CD8-positive, alpha-beta T cell (primary cell): ENCODE measurements at regions of chr11 and their contacts with region 1.

Region 1: GRCh38 chr11:73597956-73598718 is at the start of gene FAM168A:
- DNase-seq: peak; percentile 85 to 98 (median 93)
- ATAC-seq: peak; percentile 87
- H3K4me3 ChIP-seq: peak within 1 kb of the TSS; percentile 81 to 99
- H3K4me3 Mint-ChIP-seq: peak within 1 kb of the TSS; percentile 90
- H3K27ac ChIP-seq: peak within 1 kb of the TSS; percentile 76 to 83
- H3K27ac Mint-ChIP-seq: peak within 1 kb of the TSS; percentile 90
- H3K4me1 ChIP-seq: peaks cover 20% of the 10 kb centered on the region
- H3K4me1 Mint-ChIP-seq: peaks cover 46% of the 10 kb centered on the region
- H3K27me3 ChIP-seq: no peaks in the 10 kb centered on the region
- H3K27me3 Mint-ChIP-seq: no peaks in the 10 kb centered on the region
- CTCF ChIP-seq: no peak
- total RNA-seq, gene FAM168A: 18.4 to 18.8 TPM

Region 2: GRCh38 chr11:71928737-71929452 is 1669.2 kb before region 1 on chr11 and contains the start of gene RNF121:
- CTCF ChIA-PET with region 1: no interaction called
- POLR2A ChIA-PET with region 1: no interaction called
- intact Hi-C with region 1: loop called in 1 of 2 experiments (anchors 5 kb)
- DNase-seq: peak; percentile 94 to 99 (median 97)
- ATAC-seq: peak; percentile 86
- H3K4me3 ChIP-seq: peak within 1 kb of the TSS; percentile 67 to 98
- H3K4me3 Mint-ChIP-seq: peak within 1 kb of the TSS; percentile 100
- H3K27ac ChIP-seq: peak within 1 kb of the TSS; percentile 90 to 96
- H3K27ac Mint-ChIP-seq: peak within 1 kb of the TSS; percentile 99
- H3K4me1 ChIP-seq: peaks cover 22% of the 10 kb centered on the region
- H3K4me1 Mint-ChIP-seq: peaks cover 57% of the 10 kb centered on the region
- H3K27me3 ChIP-seq: no peaks in the 10 kb centered on the region
- H3K27me3 Mint-ChIP-seq: no peaks in the 10 kb centered on the region
- CTCF ChIP-seq: no peak
- total RNA-seq, gene RNF121: 8.5 to 9.0 TPM

Region 3: GRCh38 chr11:72924568-72925190 is 673.5 kb before region 1 on chr11:
- CTCF ChIA-PET with region 1: no interaction called
- POLR2A ChIA-PET with region 1: no interaction called
- intact Hi-C with region 1: no loop called
- DNase-seq: peak in 2 of 9 experiments; percentile 41 to 57
- ATAC-seq: no peak
- H3K4me3 ChIP-seq: no peak overlapping the region
- H3K4me3 Mint-ChIP-seq: no peak overlapping the region
- H3K27ac ChIP-seq: no peak overlapping the region
- H3K27ac Mint-ChIP-seq: no peak overlapping the region
- H3K4me1 ChIP-seq: peaks cover 3% of the 10 kb centered on the region
- H3K4me1 Mint-ChIP-seq: peaks cover 5% of the 10 kb centered on the region
- H3K27me3 ChIP-seq: no peaks in the 10 kb centered on the region
- H3K27me3 Mint-ChIP-seq: no peaks in the 10 kb centered on the region
- CTCF ChIP-seq: peak; percentile 42

Region 4: DNA sequence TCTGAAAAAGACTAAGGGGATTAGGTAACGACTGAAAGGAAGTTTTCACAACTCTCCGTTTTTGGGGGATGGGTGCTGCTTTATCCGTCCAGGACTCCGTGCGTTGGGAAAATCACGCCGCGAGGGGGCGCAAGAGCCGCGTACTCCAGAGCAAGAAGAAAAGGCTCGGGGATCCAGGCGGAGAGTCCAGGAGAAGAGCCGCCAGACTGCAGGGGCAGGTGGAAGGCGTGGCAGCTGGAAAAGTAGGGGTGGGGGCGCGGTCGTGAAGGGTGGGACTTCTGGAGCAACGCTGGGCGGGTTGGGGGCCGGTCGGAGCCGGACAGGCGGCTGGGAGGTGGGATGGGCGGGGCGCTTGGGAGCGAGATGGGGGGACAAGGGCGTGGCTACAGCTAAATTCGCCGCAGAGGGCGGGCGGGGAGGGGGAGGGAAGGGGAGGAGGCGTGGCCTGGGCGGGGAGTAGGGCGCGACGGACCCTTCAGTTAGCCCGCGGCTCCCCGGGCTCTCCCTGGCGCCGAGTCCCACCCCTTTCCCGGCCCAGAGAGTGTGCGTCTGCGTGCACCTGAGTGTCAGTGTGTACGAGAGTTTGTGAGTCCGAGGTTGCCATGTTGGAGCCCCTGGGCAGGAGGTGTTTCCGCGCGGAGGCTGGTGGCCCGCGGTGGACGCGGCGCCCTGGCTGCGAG is 290.7 kb before region 1 on chr11:
- CTCF ChIA-PET with region 1: no interaction called
- POLR2A ChIA-PET with region 1: no interaction called
- intact Hi-C with region 1: loop called in 1 of 2 experiments (anchors 2 kb)
- DNase-seq: peak; percentile 77 to 94 (median 89)
- ATAC-seq: peak; percentile 71
- H3K4me3 ChIP-seq: peak overlapping the region; percentile 62 to 77
- H3K4me3 Mint-ChIP-seq: peak overlapping the region; percentile 86
- H3K27ac ChIP-seq: no peak overlapping the region
- H3K27ac Mint-ChIP-seq: no peak overlapping the region
- H3K4me1 ChIP-seq: peaks cover 9% of the 10 kb centered on the region
- H3K4me1 Mint-ChIP-seq: peaks cover 10% of the 10 kb centered on the region
- H3K27me3 ChIP-seq: peaks cover 11 to 12% of the 10 kb centered on the region in 2 experiments
- H3K27me3 Mint-ChIP-seq: peaks cover 15% of the 10 kb centered on the region
- CTCF ChIP-seq: peak; percentile 46

Region 5: DNA sequence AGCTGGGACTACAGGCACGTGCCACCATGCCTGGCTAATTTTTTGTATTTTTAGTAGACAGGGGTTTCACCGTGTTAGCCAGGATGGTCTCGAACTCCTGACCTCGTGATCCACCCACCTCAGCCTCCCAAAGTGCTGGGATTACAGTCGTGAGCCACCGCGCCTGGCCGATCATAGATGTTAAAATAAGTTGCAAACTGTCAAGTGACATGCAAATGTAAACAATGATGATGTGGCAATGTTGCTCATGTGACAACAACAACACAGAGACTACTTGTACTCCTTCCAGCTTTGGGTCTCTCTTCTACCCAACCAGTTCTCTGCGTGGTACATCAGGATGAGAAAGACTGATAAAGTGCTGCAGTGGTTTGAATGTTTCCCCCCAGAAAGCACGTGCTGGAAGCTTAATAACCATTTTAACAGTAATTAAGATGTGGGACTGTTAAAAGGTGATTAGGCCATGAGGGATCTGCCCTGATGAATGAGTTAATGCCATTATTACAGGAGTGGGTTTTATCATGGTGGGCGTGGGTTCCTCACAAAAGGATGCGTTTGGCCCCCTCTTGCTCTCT is 128.0 kb before region 1 on chr11:
- CTCF ChIA-PET with region 1: no interaction called
- POLR2A ChIA-PET with region 1: no interaction called
- intact Hi-C with region 1: no loop called
- DNase-seq: no peak
- ATAC-seq: no peak
- H3K4me3 ChIP-seq: no peak overlapping the region
- H3K4me3 Mint-ChIP-seq: no peak overlapping the region
- H3K27ac ChIP-seq: no peak overlapping the region
- H3K27ac Mint-ChIP-seq: no peak overlapping the region
- H3K4me1 ChIP-seq: no peaks in the 10 kb centered on the region
- H3K4me1 Mint-ChIP-seq: no peaks in the 10 kb centered on the region
- H3K27me3 ChIP-seq: no peaks in the 10 kb centered on the region
- H3K27me3 Mint-ChIP-seq: no peaks in the 10 kb centered on the region
- CTCF ChIP-seq: no peak

Region 6: DNA sequence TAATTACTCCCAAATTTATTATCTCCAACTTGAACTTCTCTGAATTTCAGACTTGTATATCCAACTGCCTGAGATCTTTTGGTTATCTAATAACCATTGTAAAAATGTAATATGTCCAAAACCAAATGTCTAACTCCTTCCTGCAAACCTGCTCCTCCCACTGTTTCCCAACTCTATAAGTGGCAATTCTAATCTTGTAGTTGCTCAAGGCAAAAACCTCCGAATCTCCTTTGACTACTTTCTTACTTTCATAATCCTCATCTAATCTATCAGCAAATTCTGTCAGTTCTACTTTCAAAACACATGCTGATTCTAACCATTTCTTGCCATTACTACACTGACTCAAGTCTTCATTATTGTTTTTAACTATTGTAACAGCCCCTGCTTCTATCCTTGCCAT is 56.0 kb before region 1 on chr11:
- CTCF ChIA-PET with region 1: no interaction called
- POLR2A ChIA-PET with region 1: no interaction called
- intact Hi-C with region 1: no loop called
- DNase-seq: no peak
- ATAC-seq: no peak
- H3K4me3 ChIP-seq: no peak overlapping the region
- H3K4me3 Mint-ChIP-seq: no peak overlapping the region
- H3K27ac ChIP-seq: no peak overlapping the region
- H3K27ac Mint-ChIP-seq: no peak overlapping the region
- H3K4me1 ChIP-seq: peaks cover 13% of the 10 kb centered on the region
- H3K4me1 Mint-ChIP-seq: peaks cover 31% of the 10 kb centered on the region
- H3K27me3 ChIP-seq: no peaks in the 10 kb centered on the region
- H3K27me3 Mint-ChIP-seq: no peaks in the 10 kb centered on the region
- CTCF ChIP-seq: no peak

Region 7: DNA sequence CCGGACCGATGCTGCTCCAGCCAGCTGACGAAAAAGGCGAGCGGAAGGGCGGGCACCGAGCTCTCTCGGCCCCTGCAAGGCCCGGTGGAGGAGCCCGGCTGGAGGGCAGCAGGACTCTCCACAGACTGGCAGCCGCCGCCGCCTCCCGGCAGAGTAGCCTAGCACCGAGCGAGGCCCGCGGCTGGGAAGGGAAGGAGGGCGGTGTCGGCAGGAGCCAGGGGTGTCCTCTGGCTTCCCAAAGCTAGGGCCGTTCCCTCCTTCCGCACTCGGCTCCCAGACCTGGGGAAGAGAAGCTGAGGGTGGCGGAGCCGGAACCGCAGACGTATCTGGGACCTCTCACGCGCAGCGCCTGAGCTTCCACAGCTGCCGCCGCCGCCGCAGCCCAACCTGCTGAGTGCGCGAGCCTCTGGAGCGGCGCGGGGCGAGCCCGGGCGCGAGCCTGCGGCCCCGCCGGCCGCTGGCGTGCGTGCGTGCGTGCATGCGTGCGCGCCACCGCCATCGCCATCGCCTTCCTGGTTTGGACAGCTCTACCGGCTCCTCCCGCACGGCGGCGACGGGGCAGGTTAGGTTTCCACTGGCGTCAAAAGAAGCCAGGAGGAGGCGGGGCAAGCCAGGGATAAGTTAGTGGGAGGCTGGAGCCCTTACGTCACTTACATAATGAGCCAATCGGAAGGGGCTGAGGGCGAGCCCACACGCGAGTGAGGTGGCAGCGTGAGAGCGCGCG is 162.7 kb after region 1 on chr11 and contains the start of gene RAB6A:
- CTCF ChIA-PET with region 1: no interaction called
- POLR2A ChIA-PET with region 1: interaction called, 3 read pairs
- intact Hi-C with region 1: loop called (anchors 1 kb)
- DNase-seq: peak; percentile 99 to 100 (median 99)
- ATAC-seq: peak; percentile 93
- H3K4me3 ChIP-seq: peak within 1 kb of the TSS; percentile 69 to 93
- H3K4me3 Mint-ChIP-seq: peak within 1 kb of the TSS; percentile 85
- H3K27ac ChIP-seq: peak within 1 kb of the TSS; percentile 71 to 90
- H3K27ac Mint-ChIP-seq: peak within 1 kb of the TSS; percentile 95
- H3K4me1 ChIP-seq: peaks cover 17% of the 10 kb centered on the region
- H3K4me1 Mint-ChIP-seq: peaks cover 29% of the 10 kb centered on the region
- H3K27me3 ChIP-seq: no peaks in the 10 kb centered on the region
- H3K27me3 Mint-ChIP-seq: no peaks in the 10 kb centered on the region
- CTCF ChIP-seq: peak; percentile 24
- total RNA-seq, gene RAB6A: 43.7 to 53.3 TPM

Region 8: DNA sequence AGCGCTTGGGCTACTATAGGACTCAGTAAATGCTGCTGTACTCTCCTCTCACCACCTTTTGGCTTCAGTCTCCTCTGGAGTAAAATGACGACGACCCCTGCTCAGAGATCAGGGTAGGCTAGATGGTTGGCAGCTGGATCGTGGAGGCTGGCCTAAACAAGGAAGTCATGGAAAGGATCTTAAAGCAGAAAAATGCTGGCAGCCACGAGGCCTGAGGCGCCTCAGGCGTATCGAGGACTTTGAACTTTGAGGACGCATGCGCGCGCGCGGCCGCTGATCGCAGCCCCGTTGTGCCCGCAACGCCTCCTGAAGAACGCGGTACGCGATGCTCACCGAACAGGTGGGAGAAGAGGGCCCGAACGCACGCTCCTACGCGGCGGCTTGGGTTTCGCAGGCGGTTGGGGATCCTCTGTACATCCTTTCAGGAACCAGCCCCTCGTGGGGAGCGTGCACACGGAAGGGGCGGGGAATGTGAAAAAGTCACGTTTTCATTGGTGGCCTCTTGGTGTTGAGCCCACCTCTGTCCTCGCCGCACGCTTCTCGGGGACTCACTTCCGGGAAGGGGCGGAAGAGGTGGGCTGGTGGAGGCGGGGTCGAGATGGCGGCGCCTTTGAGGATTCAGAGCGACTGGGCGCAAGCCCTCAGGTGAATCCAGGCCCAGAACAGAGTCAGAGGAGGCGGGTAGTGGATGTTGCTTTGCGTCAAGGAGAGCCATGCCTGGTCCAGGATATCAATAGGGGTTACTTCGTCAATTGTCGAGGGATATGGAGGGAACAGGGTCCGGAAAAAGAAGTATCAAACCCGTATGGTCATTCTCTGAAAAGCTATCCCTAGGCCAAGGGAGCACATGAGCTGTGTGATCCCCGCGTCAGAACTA is 278.5 kb after region 1 on chr11 and contains the starts of genes COA4 and PAAF1:
- CTCF ChIA-PET with region 1: no interaction called
- POLR2A ChIA-PET with region 1: no interaction called
- intact Hi-C with region 1: loop called (anchors 1 to 2 kb)
- DNase-seq: peak; percentile 81 to 98 (median 92)
- ATAC-seq: peak; percentile 96
- H3K4me3 ChIP-seq: peak within 1 kb of the TSS; percentile 75 to 79
- H3K4me3 Mint-ChIP-seq: peak within 1 kb of the TSS; percentile 97
- H3K27ac ChIP-seq: peak within 1 kb of the TSS; percentile 79 to 81
- H3K27ac Mint-ChIP-seq: peak within 1 kb of the TSS; percentile 98
- H3K4me1 ChIP-seq: peaks cover 21% of the 10 kb centered on the region
- H3K4me1 Mint-ChIP-seq: peaks cover 42% of the 10 kb centered on the region
- H3K27me3 ChIP-seq: no peaks in the 10 kb centered on the region
- H3K27me3 Mint-ChIP-seq: no peaks in the 10 kb centered on the region
- CTCF ChIP-seq: no peak
- total RNA-seq, gene COA4: 22.0 to 25.1 TPM
- total RNA-seq, gene PAAF1: 6.2 to 6.4 TPM

Region 9: GRCh38 chr11:74492974-74493790 is 895.0 kb after region 1 on chr11 and contains the start of gene LIPT2:
- CTCF ChIA-PET with region 1: no interaction called
- POLR2A ChIA-PET with region 1: no interaction called
- intact Hi-C with region 1: loop called in 1 of 2 experiments (anchors 5 kb)
- DNase-seq: peak; percentile 93 to 99 (median 97)
- ATAC-seq: peak; percentile 95
- H3K4me3 ChIP-seq: peak within 1 kb of the TSS; percentile 54 to 97
- H3K4me3 Mint-ChIP-seq: peak within 1 kb of the TSS; percentile 88
- H3K27ac ChIP-seq: peak within 1 kb of the TSS; percentile 53 to 96
- H3K27ac Mint-ChIP-seq: peak within 1 kb of the TSS; percentile 87
- H3K4me1 ChIP-seq: peaks cover 12% of the 10 kb centered on the region
- H3K4me1 Mint-ChIP-seq: peaks cover 18% of the 10 kb centered on the region
- H3K27me3 ChIP-seq: no peaks in the 10 kb centered on the region
- H3K27me3 Mint-ChIP-seq: no peaks in the 10 kb centered on the region
- CTCF ChIP-seq: no peak
- total RNA-seq, gene LIPT2: 8.7 to 9.4 TPM